ENCODE measurements at regions of chr10 and their contacts with region 1.

Region 1: DNA sequence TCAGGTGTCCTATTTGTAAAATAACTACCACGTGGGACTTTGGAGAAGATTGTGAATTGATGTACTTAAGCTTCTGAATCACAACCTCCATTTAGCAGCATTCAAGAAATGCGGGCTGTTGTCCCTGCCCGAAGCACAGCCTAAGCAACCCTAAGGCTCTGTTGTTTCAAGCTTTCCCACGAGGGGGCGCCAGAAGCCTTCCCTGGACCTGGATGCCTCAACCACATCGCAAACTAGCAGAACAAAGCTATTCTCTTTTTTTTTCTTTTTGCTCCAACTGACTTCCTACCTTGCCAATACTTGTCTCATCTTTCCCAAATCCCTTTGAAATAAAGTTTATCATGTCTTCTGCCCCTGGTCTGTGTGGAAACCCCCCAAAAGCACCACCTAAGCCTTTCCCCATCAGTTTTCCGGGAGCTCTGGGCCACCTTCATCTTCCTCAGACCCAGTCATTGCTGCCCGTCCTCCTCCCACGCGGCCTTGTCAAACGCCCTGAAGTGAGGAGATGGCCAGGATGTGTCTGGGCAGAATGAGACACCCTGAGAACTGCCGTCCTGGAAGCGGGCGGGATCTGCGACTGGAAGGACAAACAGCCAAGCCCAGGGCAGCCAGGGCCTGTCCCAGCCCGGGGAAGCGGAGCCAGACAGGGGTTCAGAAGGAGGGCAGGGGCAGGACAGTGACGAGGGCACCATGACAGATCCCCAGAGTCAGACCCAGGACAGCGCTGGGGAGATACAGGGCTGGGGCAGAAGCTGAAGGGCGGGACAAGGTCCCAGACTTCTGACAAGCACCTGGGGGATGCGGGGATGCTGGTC is 112.7 kb downstream of the SLIT1 start:
- DNase-seq: peak; percentile 94
- H3K4me3 Mint-ChIP-seq: no peak overlapping the region
- H3K27ac Mint-ChIP-seq: no peak overlapping the region
- H3K4me1 Mint-ChIP-seq: peaks cover 10% of the 10 kb centered on the region
- H3K27me3 Mint-ChIP-seq: peaks cover 25% of the 10 kb centered on the region

Region 2: DNA sequence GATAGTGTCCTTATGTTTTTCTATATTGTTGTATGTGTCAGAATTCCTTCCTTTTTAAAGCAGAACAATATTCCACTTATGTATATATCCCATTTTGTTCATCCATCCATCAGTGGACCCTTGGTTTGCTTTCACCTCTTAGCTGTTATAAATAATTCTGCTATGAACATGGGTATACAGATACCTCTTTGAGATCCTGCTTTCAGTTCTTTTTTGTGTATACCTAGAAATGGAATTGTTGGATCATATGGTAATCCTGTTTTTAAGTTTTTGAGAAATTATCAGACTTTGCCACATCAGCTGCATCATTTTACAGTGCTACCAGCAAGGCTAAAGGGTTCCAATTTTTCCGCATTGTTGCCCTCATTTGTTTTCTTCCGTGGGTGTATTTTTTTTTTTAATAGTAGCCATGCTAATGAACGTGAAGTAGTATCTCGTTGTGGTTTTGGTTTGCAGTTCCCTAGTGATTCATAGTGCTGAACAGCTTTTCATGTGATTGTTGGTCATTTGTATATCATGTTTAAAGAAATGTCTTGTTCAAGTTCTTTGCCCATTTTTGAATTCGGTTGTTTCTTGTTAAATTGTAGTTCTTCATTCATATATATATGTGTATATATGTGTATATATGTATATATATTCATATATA is 153.2 kb before region 1 on chr10:
- CTCF ChIA-PET with region 1: no interaction called
- intact Hi-C with region 1: no loop called
- DNase-seq: no peak
- H3K4me3 Mint-ChIP-seq: no peak overlapping the region
- H3K27ac Mint-ChIP-seq: no peak overlapping the region
- H3K4me1 Mint-ChIP-seq: peaks cover 23% of the 10 kb centered on the region
- H3K27me3 Mint-ChIP-seq: no peaks in the 10 kb centered on the region

Region 3: GRCh38 chr10:97107551-97107950 is 34.5 kb after region 1 on chr10:
- CTCF ChIA-PET with region 1: interaction called, 12 read pairs
- intact Hi-C with region 1: no loop called
- DNase-seq: no peak
- H3K4me3 Mint-ChIP-seq: no peak overlapping the region
- H3K27ac Mint-ChIP-seq: no peak overlapping the region
- H3K4me1 Mint-ChIP-seq: no peaks in the 10 kb centered on the region
- H3K27me3 Mint-ChIP-seq: peaks cover 7% of the 10 kb centered on the region

Region 4: DNA sequence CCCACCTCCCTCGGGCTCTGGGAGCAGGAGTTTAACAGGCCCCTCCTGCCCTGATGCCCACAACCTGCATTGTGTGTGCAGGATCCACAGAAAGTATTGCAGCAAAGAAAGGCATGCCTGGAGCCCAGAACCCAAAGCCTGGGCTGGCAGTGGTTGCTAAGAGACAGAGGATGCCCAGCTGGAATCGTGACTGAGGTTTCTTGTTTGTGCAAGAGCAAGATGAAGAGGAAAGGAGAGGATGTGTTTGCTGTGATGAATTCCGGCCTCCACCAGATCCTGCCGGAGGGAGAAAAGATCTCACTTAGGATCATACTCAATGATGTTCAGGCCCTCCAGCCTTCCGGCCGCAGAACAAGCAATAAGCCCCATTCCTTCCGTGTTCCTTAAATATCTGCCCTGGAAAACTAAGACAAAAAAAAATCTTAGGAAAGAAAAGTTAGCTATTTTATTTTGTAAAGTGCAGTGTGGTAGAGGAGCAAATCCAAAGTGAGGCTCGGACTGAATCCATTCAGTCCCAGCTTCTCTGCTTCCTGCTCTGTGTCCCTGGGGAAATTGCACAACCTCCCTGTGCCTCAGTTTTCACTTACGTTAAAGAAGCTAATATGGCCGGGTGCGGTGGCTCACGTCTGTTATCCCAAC is 55.6 kb after region 1 on chr10:
- CTCF ChIA-PET with region 1: interaction called, 12 read pairs
- intact Hi-C with region 1: no loop called
- DNase-seq: no peak
- H3K4me3 Mint-ChIP-seq: no peak overlapping the region
- H3K27ac Mint-ChIP-seq: no peak overlapping the region
- H3K4me1 Mint-ChIP-seq: no peaks in the 10 kb centered on the region
- H3K27me3 Mint-ChIP-seq: no peaks in the 10 kb centered on the region

Region 5: GRCh38 chr10:97204826-97205679 is 132.0 kb after region 1 on chr10:
- CTCF ChIA-PET with region 1: interaction called, 213 read pairs
- intact Hi-C with region 1: loop called (anchors 1 kb)
- DNase-seq: no peak
- H3K4me3 Mint-ChIP-seq: no peak overlapping the region
- H3K27ac Mint-ChIP-seq: no peak overlapping the region
- H3K4me1 Mint-ChIP-seq: no peaks in the 10 kb centered on the region
- H3K27me3 Mint-ChIP-seq: peaks cover 9% of the 10 kb centered on the region

Region 6: GRCh38 chr10:97234400-97234799 is 161.3 kb after region 1 on chr10:
- CTCF ChIA-PET with region 1: interaction called, 54 read pairs
- intact Hi-C with region 1: loop called (anchors 1 kb)
- DNase-seq: no peak
- H3K4me3 Mint-ChIP-seq: no peak overlapping the region
- H3K27ac Mint-ChIP-seq: no peak overlapping the region
- H3K4me1 Mint-ChIP-seq: peaks cover 19% of the 10 kb centered on the region
- H3K27me3 Mint-ChIP-seq: no peaks in the 10 kb centered on the region

Region 7: GRCh38 chr10:97400665-97401454 is 327.8 kb after region 1 on chr10 and contains the start of gene RRP12:
- CTCF ChIA-PET with region 1: no interaction called
- intact Hi-C with region 1: loop called (anchors 5 kb)
- DNase-seq: peak; percentile 92
- H3K4me3 Mint-ChIP-seq: peak within 1 kb of the TSS; percentile 92
- H3K27ac Mint-ChIP-seq: peak within 1 kb of the TSS; percentile 83
- H3K4me1 Mint-ChIP-seq: peaks cover 15% of the 10 kb centered on the region
- H3K27me3 Mint-ChIP-seq: no peaks in the 10 kb centered on the region
- total RNA-seq, gene RRP12: 51.0 to 55.2 TPM

Measured in activated naive CD4-positive, alpha-beta T cell treated with anti-CD3 and anti-CD28 coated beads for 36 hours (primary cell).